HAP-1 (cell line): ENCODE measurements at regions of chr12 and their contacts with region 1.

Region 1: GRCh38 chr12:106234449-106234848 is 13.4 kb downstream of the CKAP4 start:
- DNase-seq: no peak
- H3K4me3 ChIP-seq: no peak overlapping the region
- H3K4me1 ChIP-seq: no peaks in the 10 kb centered on the region
- H3K27me3 ChIP-seq: no peaks in the 10 kb centered on the region

Region 2: GRCh38 chr12:106108185-106108835 is 126.1 kb before region 1 on chr12:
- in situ Hi-C with region 1: no loop called
- DNase-seq: peak; percentile 81 to 93
- H3K4me3 ChIP-seq: no peak overlapping the region
- H3K4me1 ChIP-seq: peaks cover 51% of the 10 kb centered on the region
- H3K27me3 ChIP-seq: no peaks in the 10 kb centered on the region

Region 3: GRCh38 chr12:106118386-106119130 is 115.9 kb before region 1 on chr12:
- in situ Hi-C with region 1: no loop called
- DNase-seq: no peak
- H3K4me3 ChIP-seq: no peak overlapping the region
- H3K4me1 ChIP-seq: peaks cover 34% of the 10 kb centered on the region
- H3K27me3 ChIP-seq: no peaks in the 10 kb centered on the region

Region 4: GRCh38 chr12:106357549-106358395 is 123.3 kb after region 1 on chr12 and contains the start of gene POLR3B:
- in situ Hi-C with region 1: loop called (anchors 10 kb)
- DNase-seq: peak; percentile 89 to 97
- H3K4me3 ChIP-seq: peak within 1 kb of the TSS; percentile 76
- H3K4me1 ChIP-seq: peaks cover 5% of the 10 kb centered on the region; the same call in 1 of the 2 replicates
- H3K27me3 ChIP-seq: no peaks in the 10 kb centered on the region

Region 5: GRCh38 chr12:106605254-106605653 is 370.8 kb after region 1 on chr12:
- in situ Hi-C with region 1: no loop called
- DNase-seq: no peak
- H3K4me3 ChIP-seq: no peak overlapping the region
- H3K4me1 ChIP-seq: no peaks in the 10 kb centered on the region; the same call in 1 of the 2 replicates
- H3K27me3 ChIP-seq: no peaks in the 10 kb centered on the region